CD4-positive, alpha-beta memory T cell (primary cell): ENCODE measurements at regions of chr11 and their contacts with region 1.

Region 1: GRCh38 chr11:130131961-130132850 is 27.4 kb upstream of the ST14 start:
- DNase-seq: peak; percentile 63 to 73 (median 68)
- H3K4me3 ChIP-seq: no peak overlapping the region
- H3K4me3 Mint-ChIP-seq: no peak overlapping the region
- H3K27ac ChIP-seq: no peak overlapping the region
- H3K27ac Mint-ChIP-seq: peak overlapping the region in 2 of 7 donors; percentile 37 to 39
- H3K4me1 ChIP-seq: no peaks in the 10 kb centered on the region
- H3K4me1 Mint-ChIP-seq: peaks cover 0 to 2% (median 0%) of the 10 kb centered on the region in 4 donors
- H3K27me3 ChIP-seq: no peaks in the 10 kb centered on the region
- H3K27me3 Mint-ChIP-seq: no peaks in the 10 kb centered on the region

Region 2: DNA sequence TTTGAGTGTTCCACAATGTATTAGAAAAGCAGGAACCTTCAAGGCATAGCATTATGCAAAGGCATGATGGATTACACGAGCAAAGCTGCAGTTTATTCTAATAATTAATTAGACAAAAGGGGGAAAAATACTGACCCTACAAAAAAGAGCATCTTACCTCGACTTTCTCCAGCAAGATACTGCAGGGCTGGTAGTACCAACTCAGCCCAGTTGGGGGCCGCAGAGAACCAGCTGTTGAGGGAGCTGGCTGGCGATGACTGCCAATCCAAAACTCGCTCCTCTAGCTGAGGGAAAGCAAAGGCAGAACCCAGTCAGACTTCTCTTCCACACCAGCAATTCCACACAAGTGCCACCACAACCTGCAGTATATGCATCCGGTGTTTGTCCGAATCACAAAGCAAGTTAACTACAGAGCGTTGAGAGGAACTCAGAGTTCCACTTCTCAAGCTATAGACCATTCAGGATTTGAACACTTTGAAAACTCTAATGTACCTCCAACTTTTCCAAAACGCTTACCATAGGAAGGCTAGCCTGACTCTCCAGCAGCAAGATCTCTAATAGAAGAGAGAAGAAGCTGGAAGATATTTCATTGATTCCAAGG is 250.5 kb before region 1 on chr11:
- CTCF ChIA-PET with region 1: interaction called, 23 read pairs
- POLR2A ChIA-PET with region 1: no interaction called
- intact Hi-C with region 1: no loop called
- DNase-seq: peak in 3 of 5 donors; percentile 17 to 39 (median 33)
- H3K4me3 ChIP-seq: no peak overlapping the region
- H3K4me3 Mint-ChIP-seq: no peak overlapping the region
- H3K27ac ChIP-seq: no peak overlapping the region
- H3K27ac Mint-ChIP-seq: peak overlapping the region in 2 of 7 donors; percentile 22 to 89
- H3K4me1 ChIP-seq: no peaks in the 10 kb centered on the region
- H3K4me1 Mint-ChIP-seq: peaks cover 0 to 10% (median 5%) of the 10 kb centered on the region in 4 donors
- H3K27me3 ChIP-seq: no peaks in the 10 kb centered on the region
- H3K27me3 Mint-ChIP-seq: no peaks in the 10 kb centered on the region

Region 3: DNA sequence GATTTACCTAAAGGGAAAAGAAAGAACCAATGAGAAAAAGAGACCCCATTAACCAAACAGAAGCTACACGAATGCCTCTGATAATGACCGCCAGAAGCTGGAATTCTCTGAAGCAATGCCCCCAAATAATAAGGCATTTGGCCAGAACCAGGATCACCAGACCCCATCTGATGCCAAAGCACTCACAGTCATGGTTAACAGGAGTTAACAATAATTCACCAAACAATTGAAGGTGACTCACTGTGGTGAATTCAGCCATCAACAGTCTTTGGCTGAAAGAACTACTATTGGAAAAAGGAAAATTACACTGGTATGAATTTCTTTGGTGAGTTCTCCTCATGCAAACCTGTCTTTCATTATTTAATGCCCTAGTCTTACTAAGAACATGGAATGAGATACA is 215.0 kb before region 1 on chr11:
- CTCF ChIA-PET with region 1: interaction called, 137 read pairs
- POLR2A ChIA-PET with region 1: no interaction called
- intact Hi-C with region 1: no loop called
- DNase-seq: no peak
- H3K4me3 ChIP-seq: no peak overlapping the region
- H3K4me3 Mint-ChIP-seq: no peak overlapping the region
- H3K27ac ChIP-seq: no peak overlapping the region
- H3K27ac Mint-ChIP-seq: peak overlapping the region in 1 of 7 donors; percentile 51
- H3K4me1 ChIP-seq: no peaks in the 10 kb centered on the region
- H3K4me1 Mint-ChIP-seq: no peaks in the 10 kb centered on the region
- H3K27me3 ChIP-seq: no peaks in the 10 kb centered on the region
- H3K27me3 Mint-ChIP-seq: no peaks in the 10 kb centered on the region

Region 4: GRCh38 chr11:129943036-129943435 is 189.2 kb before region 1 on chr11:
- CTCF ChIA-PET with region 1: interaction called, 9 read pairs
- POLR2A ChIA-PET with region 1: no interaction called
- intact Hi-C with region 1: loop called (anchors 5 kb)
- DNase-seq: no peak
- H3K4me3 ChIP-seq: no peak overlapping the region
- H3K4me3 Mint-ChIP-seq: no peak overlapping the region
- H3K27ac ChIP-seq: no peak overlapping the region
- H3K27ac Mint-ChIP-seq: no peak overlapping the region
- H3K4me1 ChIP-seq: no peaks in the 10 kb centered on the region
- H3K4me1 Mint-ChIP-seq: no peaks in the 10 kb centered on the region
- H3K27me3 ChIP-seq: no peaks in the 10 kb centered on the region
- H3K27me3 Mint-ChIP-seq: no peaks in the 10 kb centered on the region

Region 5: GRCh38 chr11:130069684-130070108 is 62.5 kb before region 1 on chr11 and contains the start of gene APLP2:
- CTCF ChIA-PET with region 1: interaction called, 8 read pairs
- POLR2A ChIA-PET with region 1: no interaction called
- intact Hi-C with region 1: loop called (anchors 2 kb)
- DNase-seq: peak; percentile 96 to 99 (median 96)
- H3K4me3 ChIP-seq: peak within 1 kb of the TSS; percentile 65 to 89
- H3K4me3 Mint-ChIP-seq: peak within 1 kb of the TSS; percentile 93 to 99 (median 98)
- H3K27ac ChIP-seq: peak within 1 kb of the TSS; percentile 74
- H3K27ac Mint-ChIP-seq: peak within 1 kb of the TSS; percentile 94 to 98 (median 97)
- H3K4me1 ChIP-seq: peaks cover 17% of the 10 kb centered on the region
- H3K4me1 Mint-ChIP-seq: peaks cover 16 to 33% (median 20%) of the 10 kb centered on the region in 4 donors
- H3K27me3 ChIP-seq: no peaks in the 10 kb centered on the region
- H3K27me3 Mint-ChIP-seq: no peaks in the 10 kb centered on the region
- total RNA-seq, gene APLP2: 58.7 to 65.3 TPM

Region 6: DNA sequence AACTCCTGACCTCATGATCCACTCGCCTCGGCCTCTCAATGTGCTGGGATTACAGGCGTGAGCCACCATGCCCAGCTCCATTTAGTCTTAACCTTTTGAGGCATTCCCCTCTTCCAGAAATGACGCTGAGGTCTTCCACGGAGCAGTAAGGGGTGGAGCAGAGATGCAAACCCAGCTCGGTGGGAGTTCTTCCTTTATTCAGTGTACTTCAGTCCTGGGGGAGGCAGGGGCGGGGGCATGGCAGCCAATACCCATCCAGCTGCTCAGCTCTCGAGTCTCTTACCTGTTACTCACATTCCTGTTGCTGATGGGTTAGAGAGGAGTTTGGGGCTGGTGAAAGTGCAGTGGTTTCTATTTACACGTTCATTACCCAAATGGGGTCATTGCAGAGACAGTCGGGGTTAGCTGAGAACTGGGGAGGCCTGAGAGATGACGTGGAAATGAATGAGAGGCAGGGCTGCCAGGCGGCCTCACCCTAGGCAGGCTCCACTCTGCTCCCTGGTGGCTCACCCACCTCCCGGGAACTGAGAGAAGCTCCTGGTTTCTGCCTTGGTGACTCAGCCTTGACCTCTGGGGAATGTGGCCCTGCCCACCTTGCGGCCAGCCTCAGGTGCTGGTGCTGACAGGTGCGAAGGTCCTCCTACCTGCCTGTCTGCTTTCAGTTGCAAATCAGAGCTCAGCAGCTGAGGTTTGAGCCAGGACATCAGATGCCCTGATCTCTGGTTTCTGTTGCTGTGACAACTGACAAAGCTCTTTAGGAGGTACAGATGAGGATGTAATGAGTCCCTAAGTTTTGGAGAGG is 14.0 kb after region 1 on chr11:
- CTCF ChIA-PET with region 1: interaction called, 33 read pairs
- POLR2A ChIA-PET with region 1: no interaction called
- intact Hi-C with region 1: no loop called
- DNase-seq: no peak
- H3K4me3 ChIP-seq: no peak overlapping the region
- H3K4me3 Mint-ChIP-seq: peak overlapping the region in 5 of 8 donors; percentile 16 to 78 (median 50)
- H3K27ac ChIP-seq: no peak overlapping the region
- H3K27ac Mint-ChIP-seq: peak overlapping the region; percentile 27 to 89 (median 78)
- H3K4me1 ChIP-seq: peaks cover 16% of the 10 kb centered on the region
- H3K4me1 Mint-ChIP-seq: peaks cover 8 to 29% (median 14%) of the 10 kb centered on the region in 4 donors
- H3K27me3 ChIP-seq: no peaks in the 10 kb centered on the region
- H3K27me3 Mint-ChIP-seq: peaks cover 0 to under 1% of the 10 kb centered on the region in 2 donors